ENCODE measurements at regions of chr6 and their contacts with region 1.

Region 1: DNA sequence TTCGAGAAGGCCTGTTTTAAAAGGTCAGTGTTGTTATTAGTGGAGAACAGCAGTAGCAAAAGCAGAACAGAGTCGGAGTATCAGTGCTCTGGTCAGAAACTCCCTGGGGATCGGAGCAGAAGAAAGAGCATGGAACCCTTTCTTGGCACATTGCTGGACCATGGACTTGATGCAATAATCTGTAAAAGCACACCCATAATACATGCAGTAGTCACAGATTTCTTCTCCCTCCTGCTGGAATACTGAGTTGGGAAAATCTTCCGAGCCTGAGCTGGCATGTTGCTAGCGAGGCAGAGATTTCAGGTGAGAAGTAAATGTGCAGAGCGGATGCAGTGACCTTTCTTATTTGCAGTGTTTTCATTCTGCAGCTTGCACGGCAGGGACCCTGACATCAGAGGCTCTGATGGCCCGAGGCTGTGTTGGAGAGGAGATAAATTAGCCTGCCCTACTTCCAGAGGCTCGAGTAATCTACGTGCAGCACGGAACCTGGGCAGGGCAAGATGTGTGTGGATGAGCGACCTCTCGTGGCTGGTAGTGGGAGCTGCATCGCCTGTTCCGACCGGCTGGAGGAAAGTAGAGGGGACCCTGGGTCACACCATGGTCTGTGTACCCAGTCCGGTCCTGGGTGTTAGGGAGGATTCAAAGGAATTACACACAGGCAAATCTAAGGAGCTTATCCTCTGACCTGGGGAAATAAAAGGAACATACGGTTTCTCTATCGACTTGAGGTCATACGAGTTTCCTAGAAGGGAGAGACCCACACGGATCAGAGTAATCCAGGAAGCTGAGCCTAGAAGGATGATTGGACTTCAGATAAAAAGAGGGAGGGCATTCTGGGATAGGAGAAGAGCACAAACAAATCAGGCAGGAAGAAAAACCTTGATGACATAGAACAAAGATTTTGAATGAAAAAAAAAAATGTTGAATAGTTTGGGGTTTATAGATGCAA is 137.0 kb upstream of the STMND1 start:
- DNase-seq: peak; percentile 62 to 87
- H3K4me3 ChIP-seq: no peak overlapping the region
- H3K4me1 ChIP-seq: no peaks in the 10 kb centered on the region
- H3K27me3 ChIP-seq: no peaks in the 10 kb centered on the region

Region 2: DNA sequence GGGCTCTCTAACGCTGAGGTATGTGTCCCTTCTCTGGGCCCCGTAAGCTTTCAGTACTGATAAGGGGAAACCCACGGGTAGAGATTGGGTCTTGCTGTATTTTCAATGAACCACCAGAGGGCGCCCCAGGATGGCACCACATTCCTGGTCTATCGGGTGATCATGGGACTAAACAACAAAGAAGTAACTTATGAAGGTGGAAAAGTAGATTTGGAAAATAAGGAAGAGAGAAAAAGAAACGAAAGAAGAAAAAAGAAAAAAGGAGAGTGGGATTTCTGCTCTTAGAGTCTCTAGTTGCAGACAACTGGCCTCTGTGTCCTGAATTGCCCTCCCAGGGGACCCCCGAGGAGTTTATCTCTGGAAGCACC is 632.7 kb before region 1 on chr6:
- in situ Hi-C with region 1: loop called (anchors 10 kb)
- DNase-seq: peak; percentile 78 to 90
- H3K4me3 ChIP-seq: no peak overlapping the region
- H3K4me1 ChIP-seq: peaks cover 6% of the 10 kb centered on the region
- H3K27me3 ChIP-seq: no peaks in the 10 kb centered on the region

Region 3: DNA sequence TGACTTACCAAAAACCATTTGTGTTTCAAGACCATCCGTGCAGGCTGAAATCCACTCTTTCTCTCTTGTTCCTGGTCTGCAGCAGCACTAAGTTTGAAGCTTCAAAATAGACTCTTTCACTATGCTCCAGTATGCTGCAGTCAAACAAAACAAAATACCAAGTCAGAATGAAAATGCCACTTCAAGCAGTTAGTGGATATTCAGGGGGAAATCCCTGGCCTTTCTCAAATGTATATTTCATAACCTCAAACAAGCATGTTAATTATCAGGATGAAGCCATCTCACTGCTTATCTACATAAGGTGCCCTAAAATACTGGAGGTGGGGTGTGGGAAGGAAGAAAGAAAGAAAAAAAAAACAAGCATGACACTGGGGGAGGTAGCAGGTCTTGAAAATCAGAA is 307.1 kb before region 1 on chr6:
- in situ Hi-C with region 1: no loop called
- DNase-seq: no peak
- H3K4me3 ChIP-seq: no peak overlapping the region
- H3K4me1 ChIP-seq: no peaks in the 10 kb centered on the region
- H3K27me3 ChIP-seq: no peaks in the 10 kb centered on the region

Region 4: DNA sequence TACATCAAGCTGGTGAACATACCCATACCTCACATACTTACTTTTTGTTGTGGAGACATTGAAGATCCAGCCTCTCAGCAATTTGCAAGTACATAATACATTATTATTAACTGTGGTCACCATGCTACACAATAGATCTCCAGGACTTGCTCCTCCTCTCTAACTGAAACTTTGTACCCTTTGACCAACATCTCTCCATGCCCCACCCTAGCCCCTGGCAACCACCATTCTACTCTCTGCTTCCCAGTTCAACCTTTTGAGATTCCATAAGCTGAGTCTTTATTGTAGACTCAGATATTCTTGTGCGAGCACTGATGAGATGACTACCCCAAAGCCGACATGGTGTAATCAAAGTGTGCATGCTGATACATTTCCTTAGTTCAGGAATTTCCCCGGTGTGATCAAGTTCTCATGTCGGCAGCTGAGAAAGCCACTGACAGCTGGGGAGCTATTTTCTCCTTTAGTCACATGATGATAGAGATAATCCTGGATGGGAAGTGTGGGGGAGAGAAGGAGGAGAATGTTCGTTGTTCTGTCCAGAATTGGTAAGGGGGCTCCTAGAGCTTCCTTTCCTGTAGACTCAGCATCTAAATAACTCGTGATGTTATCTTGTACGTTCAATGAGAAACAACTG is 420.7 kb after region 1 on chr6:
- in situ Hi-C with region 1: no loop called
- DNase-seq: no peak
- H3K4me3 ChIP-seq: no peak overlapping the region
- H3K4me1 ChIP-seq: peaks cover 5% of the 10 kb centered on the region
- H3K27me3 ChIP-seq: no peaks in the 10 kb centered on the region